A673 (cell line): ENCODE measurements at regions of chr10 and their contacts with region 1.

Region 1: DNA sequence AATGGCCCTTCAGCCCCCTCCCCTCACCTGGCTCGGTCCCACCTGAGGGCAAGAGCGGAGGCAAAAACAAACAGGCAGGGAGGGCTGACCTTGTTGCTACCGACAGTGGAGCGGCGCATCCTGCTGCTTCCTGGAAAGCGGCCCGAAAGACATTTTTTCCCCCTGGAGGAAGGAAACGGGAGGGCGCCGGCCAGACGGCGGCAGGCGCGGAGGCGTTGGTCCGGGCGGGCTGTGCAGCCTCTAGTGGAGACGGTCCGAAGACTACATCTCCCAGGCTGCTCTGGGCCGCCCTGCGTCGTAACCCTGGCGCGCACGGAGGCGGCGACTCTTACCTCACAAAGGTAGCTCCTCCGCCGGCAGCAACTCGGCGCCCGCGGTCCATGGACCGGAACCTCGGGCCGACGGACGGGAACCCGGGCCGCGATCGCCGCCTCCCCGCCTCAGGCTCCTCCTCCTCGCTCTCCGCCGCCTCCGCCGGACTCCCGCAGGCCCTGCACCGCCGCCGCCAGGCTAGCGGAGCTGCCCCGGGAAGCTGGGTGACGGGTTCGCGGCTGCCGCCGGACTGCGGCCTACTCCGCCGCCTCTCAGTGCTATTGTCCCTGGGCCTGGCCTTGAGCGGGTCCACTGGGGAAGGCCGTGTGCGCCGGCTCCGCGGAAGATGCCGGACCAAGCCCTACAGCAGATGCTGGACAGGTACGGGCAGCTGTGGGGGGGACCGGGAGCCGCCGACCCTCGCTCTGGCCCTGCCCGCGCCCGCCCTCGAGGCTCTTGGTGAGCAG is at the starts of genes CPEB3 and MARCHF5:
- DNase-seq: peak; percentile 97
- H3K4me3 ChIP-seq: peak within 1 kb of the TSS; percentile 90
- H3K27ac ChIP-seq: peak within 1 kb of the TSS; percentile 91
- H3K4me1 ChIP-seq: no peaks in the 10 kb centered on the region
- H3K27me3 ChIP-seq: no peaks in the 10 kb centered on the region
- CTCF ChIP-seq: peak; percentile 58
- total RNA-seq, gene CPEB3: 1.1 and 1.4 TPM in 2 replicates
- total RNA-seq, gene MARCHF5: 76.7 and 79.9 TPM in 2 replicates

Region 2: GRCh38 chr10:91378061-91378460 is 913.0 kb before region 1 on chr10:
- CTCF ChIA-PET with region 1: no interaction called
- POLR2A ChIA-PET with region 1: interaction called, 18 read pairs
- intact Hi-C with region 1: no loop called
- DNase-seq: peak; percentile 30
- H3K4me3 ChIP-seq: no peak overlapping the region
- H3K27ac ChIP-seq: no peak overlapping the region
- H3K4me1 ChIP-seq: peaks cover 11% of the 10 kb centered on the region
- H3K27me3 ChIP-seq: no peaks in the 10 kb centered on the region
- CTCF ChIP-seq: no peak

Region 3: GRCh38 chr10:91910467-91910866 is 380.6 kb before region 1 on chr10:
- CTCF ChIA-PET with region 1: no interaction called
- POLR2A ChIA-PET with region 1: no interaction called
- intact Hi-C with region 1: no loop called
- DNase-seq: no peak
- H3K4me3 ChIP-seq: no peak overlapping the region
- H3K27ac ChIP-seq: no peak overlapping the region
- H3K4me1 ChIP-seq: peaks cover 15% of the 10 kb centered on the region
- H3K27me3 ChIP-seq: no peaks in the 10 kb centered on the region
- CTCF ChIP-seq: no peak

Region 4: GRCh38 chr10:92087750-92088395 is 203.2 kb before region 1 on chr10:
- CTCF ChIA-PET with region 1: interaction called, 5 read pairs
- POLR2A ChIA-PET with region 1: interaction called, 16 read pairs
- intact Hi-C with region 1: loop called (anchors 1 kb)
- DNase-seq: peak; percentile 88
- H3K4me3 ChIP-seq: no peak overlapping the region
- H3K27ac ChIP-seq: no peak overlapping the region
- H3K4me1 ChIP-seq: no peaks in the 10 kb centered on the region
- H3K27me3 ChIP-seq: no peaks in the 10 kb centered on the region
- CTCF ChIP-seq: peak; percentile 79

Region 5: DNA sequence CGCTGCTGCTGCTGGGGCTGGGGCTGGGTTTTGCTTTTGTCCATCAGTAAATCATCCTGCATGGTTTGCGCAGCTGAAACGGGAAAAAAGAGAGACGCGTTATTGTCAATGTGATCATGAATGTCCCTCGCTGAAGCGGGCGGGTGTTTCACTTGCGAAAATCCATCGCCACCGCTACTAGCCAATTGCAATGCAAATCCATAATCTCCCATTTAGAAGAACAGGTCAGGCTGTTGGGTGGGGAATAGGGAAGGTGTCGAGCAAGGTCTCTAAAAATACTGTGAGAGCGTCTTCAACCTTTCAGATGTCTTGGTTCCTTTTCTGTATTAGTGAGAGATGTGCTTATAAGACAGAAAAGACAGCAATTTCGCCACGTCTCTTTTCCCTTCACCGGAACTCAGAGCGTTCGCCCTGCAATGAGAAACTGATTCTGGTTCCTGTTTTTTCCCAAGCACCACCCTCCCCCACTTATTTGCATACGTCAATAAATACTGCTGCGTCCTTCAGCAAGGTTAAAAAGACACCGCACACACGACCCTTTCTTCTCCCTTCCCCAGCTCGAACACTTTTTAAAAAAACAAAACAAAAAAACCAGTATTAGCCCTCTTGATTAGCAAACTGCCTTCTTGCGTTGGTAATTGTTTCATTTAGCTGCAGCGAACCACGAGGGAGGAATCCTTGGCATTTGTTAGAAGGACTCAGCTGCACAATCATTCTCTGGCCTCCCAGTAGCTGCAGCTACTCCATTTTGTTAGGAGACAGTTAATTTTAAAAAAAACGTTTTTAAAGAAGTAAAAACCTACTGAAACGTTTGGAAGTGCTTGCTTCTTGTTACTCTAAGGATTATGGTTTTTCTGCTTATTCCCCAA is 50.5 kb before region 1 on chr10:
- CTCF ChIA-PET with region 1: no interaction called
- POLR2A ChIA-PET with region 1: no interaction called
- intact Hi-C with region 1: loop called (anchors 5 kb)
- DNase-seq: peak; percentile 79
- H3K4me3 ChIP-seq: peak overlapping the region; percentile 66
- H3K27ac ChIP-seq: peak overlapping the region; percentile 14
- H3K4me1 ChIP-seq: peaks cover 10% of the 10 kb centered on the region
- H3K27me3 ChIP-seq: no peaks in the 10 kb centered on the region
- CTCF ChIP-seq: no peak